PC-9 (cell line): ENCODE measurements at regions of chr2 and their contacts with region 1.

Region 1: GRCh38 chr2:15191801-15192200 is 369.3 kb downstream of the NBAS start:
- DNase-seq: peak in 1 of 2 experiments; percentile 31
- H3K4me3 ChIP-seq: no peak overlapping the region
- H3K27ac ChIP-seq: no peak overlapping the region
- H3K4me1 ChIP-seq: 0 out of 2 replicates have a peak, but pooled peaks cover 5% of the 10 kb centered on the region
- H3K27me3 ChIP-seq: no peaks in the 10 kb centered on the region
- CTCF ChIP-seq: no peak

Region 2: GRCh38 chr2:15154297-15154696 is 37.5 kb before region 1 on chr2:
- CTCF ChIA-PET with region 1: no interaction called
- POLR2A ChIA-PET with region 1: interaction called, 10 read pairs
- intact Hi-C with region 1: no loop called
- DNase-seq: no peak
- H3K4me3 ChIP-seq: no peak overlapping the region
- H3K27ac ChIP-seq: no peak overlapping the region
- H3K4me1 ChIP-seq: peaks cover 6% of the 10 kb centered on the region; the same call in 1 of the 2 replicates
- H3K27me3 ChIP-seq: no peaks in the 10 kb centered on the region
- CTCF ChIP-seq: no peak